PC-3 (cell line): ENCODE measurements at regions of chr18 and their contacts with region 1.

Region 1: DNA sequence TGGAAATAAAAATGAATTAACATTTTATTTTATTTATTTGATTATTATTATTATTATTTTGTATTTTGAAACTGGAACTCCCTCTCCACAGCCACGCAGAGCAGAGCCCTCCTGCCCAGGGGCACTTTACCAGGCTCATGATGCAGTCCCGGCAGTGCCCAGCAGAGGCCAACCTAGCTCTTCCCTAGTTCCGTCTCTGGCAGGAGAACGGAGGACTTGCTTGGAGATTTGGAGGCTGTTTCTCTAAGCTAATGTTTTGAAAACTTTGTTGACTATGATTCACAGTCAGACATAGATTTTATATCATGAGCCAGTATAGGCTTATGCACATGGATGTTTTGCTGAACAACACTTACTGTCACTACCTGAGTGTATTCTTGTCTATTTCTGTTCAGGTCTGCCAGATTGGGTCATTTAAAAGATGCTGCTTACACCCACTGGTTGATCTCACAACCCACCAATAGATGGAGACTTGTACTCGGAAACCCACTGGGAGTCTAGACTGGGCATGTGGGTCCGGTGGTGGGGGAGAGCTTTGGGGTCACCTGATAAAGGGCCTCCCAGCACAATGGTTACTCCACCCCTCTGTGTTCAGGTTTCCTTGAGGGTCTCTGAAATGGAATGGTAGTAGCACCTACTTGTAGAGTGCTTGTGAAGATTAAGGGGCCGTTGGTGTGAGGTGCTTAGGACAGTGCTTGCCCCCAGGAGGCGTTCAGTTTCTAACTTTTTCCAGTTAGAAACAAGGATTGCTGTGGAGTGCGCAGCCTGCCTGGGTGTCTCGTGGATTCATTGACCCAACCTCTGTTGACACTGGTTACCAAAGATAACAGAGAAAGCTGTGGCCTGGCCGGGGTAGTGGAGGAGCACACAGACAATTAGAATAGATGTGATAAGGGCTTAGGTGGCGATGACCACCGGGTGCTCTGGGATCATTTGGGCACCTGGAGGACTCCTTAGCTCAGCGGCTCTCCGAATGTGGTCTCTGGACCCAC is 177.3 kb downstream of the HAUS1 start:
- DNase-seq: peak; percentile 71
- ATAC-seq: peak; percentile 84
- H3K4me3 ChIP-seq: no peak overlapping the region
- H3K27ac ChIP-seq: no peak overlapping the region
- H3K4me1 ChIP-seq: no peaks in the 10 kb centered on the region
- H3K27me3 ChIP-seq: no peaks in the 10 kb centered on the region
- CTCF ChIP-seq: peak; percentile 64

Region 2: GRCh38 chr18:46314011-46314410 is 32.5 kb after region 1 on chr18:
- CTCF ChIA-PET with region 1: no interaction called
- POLR2A ChIA-PET with region 1: no interaction called
- intact Hi-C with region 1: no loop called
- DNase-seq: no peak
- ATAC-seq: no peak
- H3K4me3 ChIP-seq: no peak overlapping the region
- H3K27ac ChIP-seq: no peak overlapping the region
- H3K4me1 ChIP-seq: no peaks in the 10 kb centered on the region
- H3K27me3 ChIP-seq: no peaks in the 10 kb centered on the region
- CTCF ChIP-seq: no peak

Region 3: GRCh38 chr18:46333431-46334135 is 52.1 kb after region 1 on chr18:
- CTCF ChIA-PET with region 1: no interaction called
- POLR2A ChIA-PET with region 1: no interaction called
- intact Hi-C with region 1: loop called (anchors 5 kb)
- DNase-seq: peak; percentile 46
- ATAC-seq: peak; percentile 70
- H3K4me3 ChIP-seq: peak overlapping the region; percentile 68
- H3K27ac ChIP-seq: 0 out of 2 replicates have a peak overlapping the region, but pooled peaks have one; percentile 9
- H3K4me1 ChIP-seq: peaks cover 18% of the 10 kb centered on the region; the same call in 1 of the 2 replicates
- H3K27me3 ChIP-seq: no peaks in the 10 kb centered on the region
- CTCF ChIP-seq: no peak

Region 4: DNA sequence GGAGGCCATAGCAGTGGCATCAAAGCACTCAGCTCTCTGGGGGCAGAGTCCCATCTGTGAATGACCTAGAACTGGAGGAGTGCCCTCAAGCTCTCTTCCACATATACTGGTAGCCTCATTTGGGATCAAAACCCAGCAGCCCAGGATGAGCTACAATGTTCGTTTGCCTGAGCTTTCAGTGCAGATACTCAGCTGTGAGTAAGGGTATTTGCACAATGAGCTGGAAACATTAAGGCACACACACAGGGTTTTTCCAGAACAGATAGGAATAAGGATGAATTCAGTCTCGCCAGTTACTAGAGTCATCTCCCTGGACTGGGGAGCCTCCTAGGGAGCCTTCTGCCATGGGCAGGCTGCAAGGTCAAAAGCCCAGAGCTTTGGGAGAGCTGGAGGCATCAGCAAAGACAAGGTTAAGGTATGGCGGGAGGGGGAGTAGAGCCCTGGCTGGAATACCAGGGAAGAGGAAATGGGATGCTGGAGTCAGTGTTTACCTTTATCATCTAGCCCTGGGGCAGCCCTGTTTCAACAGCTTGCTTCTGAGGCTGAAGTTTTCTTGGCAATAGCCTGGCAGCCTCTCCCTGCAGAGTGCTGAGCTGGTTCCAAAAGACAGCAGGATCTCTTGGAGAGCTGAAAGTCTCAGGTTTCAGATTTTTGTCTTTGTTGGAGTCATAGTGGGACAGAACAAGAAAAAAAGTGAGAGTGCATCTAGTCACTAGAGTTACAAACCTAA is 187.9 kb after region 1 on chr18:
- CTCF ChIA-PET with region 1: interaction called, 8 read pairs
- POLR2A ChIA-PET with region 1: interaction called, 3 read pairs
- intact Hi-C with region 1: loop called (anchors 5 kb)
- DNase-seq: peak; percentile 70
- ATAC-seq: peak; percentile 91
- H3K4me3 ChIP-seq: no peak overlapping the region
- H3K27ac ChIP-seq: peak overlapping the region; percentile 78
- H3K4me1 ChIP-seq: peaks cover 22% of the 10 kb centered on the region
- H3K27me3 ChIP-seq: no peaks in the 10 kb centered on the region
- CTCF ChIP-seq: no peak

Region 5: GRCh38 chr18:46518438-46518837 is 237.0 kb after region 1 on chr18:
- CTCF ChIA-PET with region 1: interaction called, 12 read pairs
- POLR2A ChIA-PET with region 1: no interaction called
- intact Hi-C with region 1: loop called (anchors 1 kb)
- DNase-seq: peak; percentile 19
- ATAC-seq: peak; percentile 79
- H3K4me3 ChIP-seq: no peak overlapping the region
- H3K27ac ChIP-seq: no peak overlapping the region
- H3K4me1 ChIP-seq: no peaks in the 10 kb centered on the region
- H3K27me3 ChIP-seq: no peaks in the 10 kb centered on the region
- CTCF ChIP-seq: no peak; the same call in 1 of the 2 replicates

Region 6: GRCh38 chr18:46660955-46661749 is 379.7 kb after region 1 on chr18:
- CTCF ChIA-PET with region 1: interaction called, 12 read pairs
- POLR2A ChIA-PET with region 1: no interaction called
- intact Hi-C with region 1: loop called (anchors 2 kb)
- DNase-seq: no peak
- ATAC-seq: no peak
- H3K4me3 ChIP-seq: no peak overlapping the region
- H3K27ac ChIP-seq: no peak overlapping the region
- H3K4me1 ChIP-seq: no peaks in the 10 kb centered on the region
- H3K27me3 ChIP-seq: no peaks in the 10 kb centered on the region
- CTCF ChIP-seq: no peak